PC-3 (cell line): ENCODE measurements at regions of chr19 and their contacts with region 1.

Region 1: GRCh38 chr19:35775298-35776110 is at the start of gene ARHGAP33:
- DNase-seq: peak; percentile 97
- ATAC-seq: peak; percentile 93
- H3K4me3 ChIP-seq: peak within 1 kb of the TSS; percentile 66
- H3K27ac ChIP-seq: no peak within 1 kb of the TSS
- H3K4me1 ChIP-seq: peaks cover 7% of the 10 kb centered on the region
- H3K27me3 ChIP-seq: no peaks in the 10 kb centered on the region
- CTCF ChIP-seq: no peak
- total RNA-seq, gene ARHGAP33: 3.7 and 5.4 TPM in 2 replicates

Region 2: DNA sequence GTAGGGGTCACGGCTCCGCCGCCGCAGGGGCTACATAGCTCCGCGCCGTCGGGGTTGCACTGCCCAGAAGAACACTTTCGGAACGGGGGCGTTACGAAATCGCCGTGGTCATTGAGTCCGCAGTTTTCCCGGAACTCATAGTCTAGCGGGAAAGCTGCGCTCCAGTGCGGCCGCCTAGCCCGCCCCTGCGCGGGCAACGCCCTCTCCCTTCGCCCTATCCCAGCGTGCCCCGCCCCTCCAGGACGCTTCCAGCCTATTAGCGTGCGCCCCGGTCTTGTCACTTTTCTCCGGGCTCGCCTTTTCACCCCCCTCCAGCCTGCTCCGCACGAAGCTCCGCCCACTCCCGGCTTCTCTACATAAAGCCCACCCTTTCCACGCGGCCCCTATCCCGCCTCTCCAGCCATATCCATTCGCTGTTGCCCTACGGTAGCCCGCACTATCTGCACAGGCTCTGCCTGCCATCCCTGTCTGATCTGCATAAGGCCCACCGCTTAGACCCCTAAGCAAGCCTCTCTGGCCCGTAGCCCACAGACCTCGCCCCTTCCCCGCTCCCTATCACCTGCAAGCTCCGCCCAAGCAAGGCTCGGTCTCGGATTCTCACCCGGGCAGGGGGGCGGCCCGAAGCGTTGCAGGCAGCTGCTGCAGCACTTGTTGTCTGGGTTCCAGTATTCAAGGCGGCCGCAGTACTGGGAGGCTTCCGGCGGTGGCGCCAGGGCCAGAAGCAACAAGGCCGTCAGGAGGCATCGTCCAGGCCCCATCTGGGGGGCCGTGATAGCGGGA is 34.9 kb before region 1 on chr19:
- CTCF ChIA-PET with region 1: no interaction called
- POLR2A ChIA-PET with region 1: interaction called, 7 read pairs
- intact Hi-C with region 1: loop called (anchors 2 kb)
- DNase-seq: peak; percentile 91
- ATAC-seq: peak; percentile 83
- H3K4me3 ChIP-seq: peak overlapping the region; percentile 70
- H3K27ac ChIP-seq: no peak overlapping the region
- H3K4me1 ChIP-seq: peaks cover 9% of the 10 kb centered on the region
- H3K27me3 ChIP-seq: no peaks in the 10 kb centered on the region
- CTCF ChIP-seq: 0 out of 2 replicates have a peak, but pooled peaks have one; percentile 21

Region 3: DNA sequence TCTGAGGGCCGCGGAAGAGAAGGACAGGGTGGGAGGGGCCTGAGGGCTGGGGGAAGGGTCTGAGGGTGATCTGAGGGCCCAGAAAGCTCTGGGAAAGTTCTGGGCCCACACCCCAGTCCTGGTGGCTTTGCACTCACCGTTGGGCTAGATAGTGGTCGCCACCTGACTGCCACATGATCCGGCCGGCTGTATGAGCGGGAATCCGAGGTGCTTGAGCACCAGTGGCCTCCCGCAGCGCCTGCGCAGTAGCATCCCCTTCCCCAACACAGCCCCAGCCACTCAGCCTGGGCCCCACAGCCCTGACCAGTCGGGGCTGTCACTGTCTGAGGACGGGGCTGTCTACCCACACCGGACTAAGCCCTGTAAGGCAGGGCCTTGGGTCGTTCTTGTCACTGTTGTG is 22.2 kb after region 1 on chr19:
- CTCF ChIA-PET with region 1: no interaction called
- POLR2A ChIA-PET with region 1: no interaction called
- intact Hi-C with region 1: no loop called
- DNase-seq: no peak
- ATAC-seq: no peak
- H3K4me3 ChIP-seq: no peak overlapping the region
- H3K27ac ChIP-seq: no peak overlapping the region
- H3K4me1 ChIP-seq: no peaks in the 10 kb centered on the region
- H3K27me3 ChIP-seq: no peaks in the 10 kb centered on the region
- CTCF ChIP-seq: no peak